SK-N-SH (cell line): ENCODE measurements at regions of chr1 and their contacts with region 1.

Region 1: GRCh38 chr1:23634842-23635651 is 56.6 kb upstream of the RPL11 start:
- DNase-seq: peak; percentile 84
- H3K4me3 ChIP-seq: peak overlapping the region; percentile 41 to 63
- H3K27ac ChIP-seq: peak overlapping the region; percentile 64 to 93
- H3K4me1 ChIP-seq: peaks cover 3 to 31% of the 10 kb centered on the region in 2 experiments; a peak in 2 of 4 replicates
- H3K27me3 ChIP-seq: no peaks in the 10 kb centered on the region
- CTCF ChIP-seq: peak; percentile 89
- EP300 ChIP-seq: no peak
- RAD21 ChIP-seq: peak; percentile 75

Region 2: GRCh38 chr1:23496490-23497181 is 138.4 kb before region 1 on chr1:
- CTCF ChIA-PET with region 1: interaction called, 111 read pairs
- POLR2A ChIA-PET with region 1: no interaction called
- DNase-seq: no peak
- H3K4me3 ChIP-seq: no peak overlapping the region; a peak in 1 of 4 replicates
- H3K27ac ChIP-seq: no peak overlapping the region
- H3K4me1 ChIP-seq: no peaks in the 10 kb centered on the region
- H3K27me3 ChIP-seq: no peaks in the 10 kb centered on the region
- CTCF ChIP-seq: no peak
- EP300 ChIP-seq: no peak
- RAD21 ChIP-seq: no peak

Region 3: DNA sequence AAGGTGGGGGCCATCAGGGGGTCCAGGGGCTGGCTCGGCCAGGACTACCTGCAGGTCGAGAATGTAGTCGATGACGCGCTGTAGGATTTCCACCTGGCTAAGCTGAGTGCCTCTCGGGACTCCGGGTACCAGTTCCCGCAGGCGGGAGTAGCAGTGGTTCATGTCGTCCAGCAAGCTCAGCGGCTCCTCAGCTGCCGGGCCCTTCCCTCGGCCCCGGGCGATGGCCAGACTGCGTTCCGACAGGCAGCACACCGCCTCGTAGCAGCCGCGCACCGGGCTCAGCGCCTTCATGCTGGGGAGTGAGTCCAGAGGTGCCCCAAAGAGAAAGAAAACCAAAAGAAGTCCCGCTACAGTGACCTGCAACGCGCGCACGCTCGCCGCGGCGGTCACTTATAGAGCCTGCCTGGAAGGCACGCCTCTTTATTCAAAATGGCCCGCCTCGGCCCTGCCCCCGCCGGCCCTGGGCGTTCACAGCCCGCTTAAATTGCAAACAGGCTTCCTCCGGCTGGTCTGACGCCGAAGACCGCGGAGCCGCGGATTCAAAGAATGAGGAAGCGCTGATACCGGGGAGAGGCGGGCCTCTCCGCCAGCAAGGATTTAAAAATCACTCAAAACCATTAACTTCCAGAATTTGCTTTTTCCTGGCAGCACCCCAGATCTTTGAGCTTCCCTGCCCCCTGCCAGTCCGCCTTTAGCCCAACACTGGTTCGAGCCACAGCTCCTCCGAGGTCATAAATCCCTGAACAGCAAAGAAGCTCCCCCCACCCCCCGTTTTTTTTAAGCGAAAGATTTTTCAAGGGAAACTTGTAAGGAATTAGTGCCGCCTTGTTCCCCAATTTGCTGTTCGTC is 75.7 kb before region 1 on chr1 and contains the start of gene ID3:
- CTCF ChIA-PET with region 1: interaction called, 708 read pairs
- POLR2A ChIA-PET with region 1: interaction called, 9 read pairs
- DNase-seq: peak; percentile 83
- H3K4me3 ChIP-seq: peak within 1 kb of the TSS; percentile 88 to 92
- H3K27ac ChIP-seq: peak within 1 kb of the TSS; percentile 98 to 100
- H3K4me1 ChIP-seq: peaks cover 60 to 77% of the 10 kb centered on the region in 2 experiments
- H3K27me3 ChIP-seq: no peaks in the 10 kb centered on the region
- CTCF ChIP-seq: no peak
- EP300 ChIP-seq: peak; percentile 14 to 58; a peak in 3 of 4 replicates
- RAD21 ChIP-seq: 0 out of 2 replicates have a peak, but pooled peaks have one; percentile 0
- polyA plus RNA-seq, gene ID3: 394 and 504 TPM in 2 replicates

Region 4: GRCh38 chr1:23585447-23586015 is 49.5 kb before region 1 on chr1:
- CTCF ChIA-PET with region 1: interaction called, 11 read pairs
- POLR2A ChIA-PET with region 1: no interaction called
- DNase-seq: no peak
- H3K4me3 ChIP-seq: no peak overlapping the region
- H3K27ac ChIP-seq: peak overlapping the region in 1 of 2 experiments; percentile 90; a peak in 2 of 4 replicates
- H3K4me1 ChIP-seq: peaks cover 8 to 15% of the 10 kb centered on the region in 2 experiments; a peak in 2 of 4 replicates
- H3K27me3 ChIP-seq: no peaks in the 10 kb centered on the region
- CTCF ChIP-seq: no peak
- EP300 ChIP-seq: peak in 1 of 2 experiments; percentile 81; a peak in 1 of 4 replicates
- RAD21 ChIP-seq: no peak

Region 5: DNA sequence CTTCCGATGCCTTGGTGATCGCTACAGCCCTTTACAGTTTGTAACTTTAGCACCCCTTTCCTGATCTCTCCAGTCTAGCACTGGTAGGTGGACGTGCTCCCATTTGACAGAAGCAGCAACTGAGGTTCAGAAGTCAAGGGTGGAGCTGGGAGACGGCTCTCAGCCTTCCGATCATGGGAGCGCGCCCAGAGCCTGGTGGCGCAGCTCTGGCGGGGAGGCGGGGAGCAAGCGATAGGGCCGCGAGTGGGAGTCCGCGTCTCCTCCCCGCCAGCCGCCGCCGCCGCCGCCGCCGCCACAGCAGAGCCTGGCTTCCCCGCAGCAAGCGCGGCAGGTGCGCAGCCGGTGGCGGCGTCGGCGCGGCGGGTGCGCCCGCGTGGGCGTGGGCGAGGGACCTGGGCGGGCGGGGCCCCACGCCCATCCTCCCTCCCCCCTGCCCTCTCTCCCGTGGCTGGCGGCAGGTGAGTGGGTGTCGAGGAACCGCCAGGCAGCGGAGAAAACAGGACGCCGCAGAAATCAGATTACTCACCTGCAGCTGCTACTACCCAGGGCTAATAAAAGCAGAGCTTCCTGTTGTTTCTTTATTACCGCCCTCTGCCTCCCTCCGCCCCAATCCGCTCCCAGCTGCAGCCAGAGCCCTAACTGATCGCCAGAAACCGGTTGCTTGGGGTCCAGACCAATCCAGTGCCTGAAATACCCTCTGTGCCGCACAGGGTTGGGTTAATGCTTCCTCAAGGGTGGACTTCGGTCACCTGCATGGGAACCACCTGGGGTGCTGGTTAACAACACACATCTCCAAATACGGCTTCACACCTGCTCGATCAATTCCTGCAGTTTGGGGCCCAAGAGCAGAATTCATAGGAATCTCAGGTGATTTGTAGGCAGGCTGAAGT is 15.5 kb before region 1 on chr1:
- CTCF ChIA-PET with region 1: interaction called, 78 read pairs
- POLR2A ChIA-PET with region 1: interaction called, 4 read pairs
- DNase-seq: peak; percentile 78
- H3K4me3 ChIP-seq: peak overlapping the region in 1 of 2 experiments; percentile 35; a peak in 2 of 4 replicates
- H3K27ac ChIP-seq: no peak overlapping the region
- H3K4me1 ChIP-seq: peaks cover 0 to 8% of the 10 kb centered on the region in 2 experiments; a peak in 1 of 4 replicates
- H3K27me3 ChIP-seq: peaks cover 4% of the 10 kb centered on the region; the same call in 1 of the 2 replicates
- CTCF ChIP-seq: no peak
- EP300 ChIP-seq: no peak
- RAD21 ChIP-seq: no peak

Region 6: GRCh38 chr1:23664837-23665795 is 30.1 kb after region 1 on chr1:
- CTCF ChIA-PET with region 1: interaction called, 95 read pairs
- POLR2A ChIA-PET with region 1: no interaction called
- DNase-seq: peak; percentile 54
- H3K4me3 ChIP-seq: no peak overlapping the region; a peak in 1 of 4 replicates
- H3K27ac ChIP-seq: no peak overlapping the region
- H3K4me1 ChIP-seq: no peaks in the 10 kb centered on the region
- H3K27me3 ChIP-seq: no peaks in the 10 kb centered on the region
- CTCF ChIP-seq: peak; percentile 66
- EP300 ChIP-seq: no peak
- RAD21 ChIP-seq: peak; percentile 68

Region 7: GRCh38 chr1:23732363-23733224 is 97.5 kb after region 1 on chr1:
- CTCF ChIA-PET with region 1: no interaction called
- POLR2A ChIA-PET with region 1: no interaction called
- DNase-seq: no peak
- H3K4me3 ChIP-seq: no peak overlapping the region
- H3K27ac ChIP-seq: no peak overlapping the region
- H3K4me1 ChIP-seq: 0 out of 4 replicates have a peak, but pooled peaks cover 0 to 5% of the 10 kb centered on the region in 2 experiments
- H3K27me3 ChIP-seq: no peaks in the 10 kb centered on the region
- CTCF ChIP-seq: no peak
- EP300 ChIP-seq: no peak
- RAD21 ChIP-seq: no peak

Region 8: GRCh38 chr1:24119859-24120756 is 485.1 kb after region 1 on chr1:
- CTCF ChIA-PET with region 1: no interaction called
- POLR2A ChIA-PET with region 1: no interaction called
- DNase-seq: no peak
- H3K4me3 ChIP-seq: no peak overlapping the region
- H3K27ac ChIP-seq: no peak overlapping the region
- H3K4me1 ChIP-seq: no peaks in the 10 kb centered on the region; a peak in 1 of 4 replicates
- H3K27me3 ChIP-seq: no peaks in the 10 kb centered on the region; the same call in 1 of the 2 replicates
- CTCF ChIP-seq: no peak
- EP300 ChIP-seq: no peak
- RAD21 ChIP-seq: no peak